Panc1 (cell line): ENCODE measurements at regions of chr11 and their contacts with region 1.

Region 1: GRCh38 chr11:60831143-60831500 is 10.8 kb upstream of the CCDC86 start:
- DNase-seq: peak; percentile 58
- ATAC-seq: peak; percentile 95
- H3K4me3 ChIP-seq: peak overlapping the region in 1 of 2 experiments; percentile 28; a peak in 2 of 4 replicates
- H3K27ac ChIP-seq: no peak overlapping the region
- H3K4me1 ChIP-seq: no peaks in the 10 kb centered on the region
- H3K27me3 ChIP-seq: peaks cover 8% of the 10 kb centered on the region
- CTCF ChIP-seq: peak; percentile 94

Region 2: DNA sequence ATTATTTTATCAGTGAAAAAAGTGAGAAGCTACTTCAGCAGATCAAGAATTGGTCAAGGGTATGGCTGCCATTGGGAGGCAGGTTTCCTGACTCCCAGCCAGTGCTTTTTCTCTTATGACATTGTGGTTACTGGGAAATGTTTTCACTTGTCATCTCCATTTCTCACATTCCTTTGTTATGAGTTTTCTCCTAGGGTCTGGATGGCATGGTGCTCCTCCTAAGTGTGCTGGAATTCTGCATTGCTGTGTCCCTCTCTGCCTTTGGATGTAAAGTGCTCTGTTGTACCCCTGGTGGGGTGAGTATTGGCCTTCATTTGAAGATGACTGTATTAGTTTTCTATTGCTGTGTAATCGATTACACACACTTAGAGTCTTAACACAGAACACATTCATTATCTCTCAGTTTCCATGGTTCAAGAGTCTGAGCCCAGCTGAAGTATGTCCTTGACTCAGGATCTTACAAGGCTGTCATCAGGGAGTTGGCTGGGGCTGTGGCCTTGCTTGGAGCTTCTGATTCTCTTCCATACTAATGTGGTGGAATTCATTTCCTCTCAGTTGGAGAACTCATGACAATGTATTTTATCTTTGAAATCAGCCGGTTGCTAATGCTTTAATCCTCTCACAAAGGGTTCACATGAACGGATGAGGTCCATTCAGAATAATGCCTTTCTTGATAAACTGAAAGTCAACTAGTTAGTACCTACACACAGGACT is 525.1 kb before region 1 on chr11:
- CTCF ChIA-PET with region 1: no interaction called
- POLR2A ChIA-PET with region 1: no interaction called
- in situ Hi-C with region 1: no loop called
- intact Hi-C with region 1: no loop called
- DNase-seq: no peak
- ATAC-seq: no peak; the same call in 1 of the 2 replicates
- H3K4me3 ChIP-seq: no peak overlapping the region
- H3K27ac ChIP-seq: no peak overlapping the region
- H3K4me1 ChIP-seq: no peaks in the 10 kb centered on the region
- H3K27me3 ChIP-seq: no peaks in the 10 kb centered on the region
- CTCF ChIP-seq: no peak

Region 3: DNA sequence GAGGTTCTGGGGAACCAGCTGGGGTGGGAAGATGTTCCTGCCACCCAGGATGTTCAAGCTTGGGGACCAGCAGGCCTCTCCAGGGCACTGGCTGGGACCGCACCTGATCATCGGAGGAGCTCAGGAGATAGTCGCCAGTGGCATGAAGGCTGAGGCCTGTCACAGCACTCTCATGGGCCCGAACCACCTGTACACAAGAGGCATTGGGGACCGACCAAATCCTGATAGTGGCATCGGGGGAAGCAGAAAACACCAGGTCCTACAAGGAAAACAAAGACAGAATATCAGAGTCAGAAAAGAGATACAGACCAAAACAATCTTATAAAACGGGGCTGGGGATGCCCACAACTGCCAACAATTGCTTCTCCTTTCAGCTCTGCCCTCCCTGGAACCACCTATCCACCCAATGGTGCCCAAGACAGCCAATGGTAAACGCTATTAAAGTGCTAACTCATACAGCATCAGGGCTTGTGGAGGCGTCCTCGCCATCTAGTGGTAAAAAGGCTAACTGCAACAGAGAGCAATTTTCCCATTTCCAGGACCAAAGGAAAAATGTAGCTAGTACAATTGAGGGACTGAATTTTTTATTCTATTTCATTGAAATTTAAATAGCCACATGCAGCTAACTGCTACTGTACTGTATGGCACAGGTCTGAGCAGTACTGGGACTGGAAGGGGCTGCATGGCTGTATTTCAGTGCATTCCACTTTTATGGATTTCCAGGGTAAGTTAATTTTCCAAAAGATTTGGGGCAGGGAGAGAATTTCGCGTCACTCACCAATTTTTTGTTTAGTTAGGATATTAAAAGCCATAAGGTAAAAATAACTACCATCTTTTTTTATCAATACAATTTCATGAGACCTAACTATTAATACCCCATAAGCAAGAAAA is 68.2 kb after region 1 on chr11:
- CTCF ChIA-PET with region 1: interaction called, 12 read pairs
- POLR2A ChIA-PET with region 1: no interaction called
- in situ Hi-C with region 1: no loop called
- intact Hi-C with region 1: loop called (anchors 1 kb)
- DNase-seq: peak; percentile 64
- ATAC-seq: peak; percentile 85
- H3K4me3 ChIP-seq: no peak overlapping the region
- H3K27ac ChIP-seq: peak overlapping the region; percentile 56
- H3K4me1 ChIP-seq: no peaks in the 10 kb centered on the region
- H3K27me3 ChIP-seq: no peaks in the 10 kb centered on the region
- CTCF ChIP-seq: peak; percentile 96

Region 4: DNA sequence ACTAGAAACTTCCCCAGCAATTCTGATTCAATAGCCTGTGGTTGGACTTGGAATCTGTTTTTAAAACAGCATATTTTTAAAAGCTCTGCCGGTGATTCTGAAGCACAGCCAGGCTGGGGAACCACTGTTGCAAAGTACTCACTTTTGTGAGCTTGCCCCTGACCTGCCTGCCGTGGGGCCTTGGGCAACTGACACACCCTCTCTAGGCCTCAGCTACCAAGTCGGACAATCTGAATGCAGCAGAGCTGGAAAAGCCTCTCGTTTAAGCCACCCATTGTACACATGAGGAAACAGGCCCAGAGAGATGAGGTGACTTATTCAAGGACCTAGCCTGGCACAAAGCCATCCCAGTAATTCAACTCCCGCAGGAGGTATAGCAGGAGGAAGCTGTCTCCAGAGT is 112.0 kb after region 1 on chr11:
- CTCF ChIA-PET with region 1: no interaction called
- POLR2A ChIA-PET with region 1: no interaction called
- in situ Hi-C with region 1: no loop called
- intact Hi-C with region 1: no loop called
- DNase-seq: no peak
- ATAC-seq: no peak
- H3K4me3 ChIP-seq: no peak overlapping the region
- H3K27ac ChIP-seq: no peak overlapping the region
- H3K4me1 ChIP-seq: no peaks in the 10 kb centered on the region
- H3K27me3 ChIP-seq: no peaks in the 10 kb centered on the region
- CTCF ChIP-seq: no peak

Region 5: GRCh38 chr11:61187505-61188130 is 356.5 kb after region 1 on chr11:
- CTCF ChIA-PET with region 1: no interaction called
- POLR2A ChIA-PET with region 1: no interaction called
- in situ Hi-C with region 1: no loop called
- intact Hi-C with region 1: loop called (anchors 5 kb)
- DNase-seq: peak; percentile 58
- ATAC-seq: peak; percentile 92
- H3K4me3 ChIP-seq: no peak overlapping the region
- H3K27ac ChIP-seq: no peak overlapping the region
- H3K4me1 ChIP-seq: no peaks in the 10 kb centered on the region
- H3K27me3 ChIP-seq: no peaks in the 10 kb centered on the region
- CTCF ChIP-seq: peak; percentile 95